Body of pancreas (tissue), 4 donors: ENCODE measurements at regions of chr22 and their contacts with region 1.

Region 1: DNA sequence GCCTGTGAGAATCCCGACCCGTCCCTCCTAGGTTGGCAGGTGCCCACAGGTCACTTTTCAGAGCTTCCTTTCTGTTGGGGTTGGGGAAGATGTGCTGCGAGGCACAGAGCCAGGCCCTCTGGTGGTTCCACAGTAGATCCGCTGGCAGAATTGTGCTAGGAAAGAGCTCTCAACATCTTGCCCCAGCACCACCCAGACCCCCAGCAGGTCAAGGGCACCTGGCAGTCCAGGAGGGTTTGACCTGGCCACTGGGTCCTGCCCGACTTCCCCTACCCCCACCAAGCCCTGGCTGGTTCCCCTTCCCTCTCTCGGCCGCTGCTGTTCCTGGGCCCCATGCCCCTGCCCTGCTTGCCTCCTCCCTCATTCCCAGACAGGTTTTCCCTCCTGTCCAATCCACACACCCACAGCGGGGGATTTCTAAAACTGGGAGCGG is 26.2 kb upstream of the GCAT start:
- DNase-seq: peak in 2 of 4 donors; percentile 39 to 43
- ATAC-seq: no peak
- H3K4me3 ChIP-seq: no peak overlapping the region
- H3K27ac ChIP-seq: no peak overlapping the region
- H3K4me1 ChIP-seq: peaks cover 20% of the 10 kb centered on the region
- H3K27me3 ChIP-seq: no peaks in the 10 kb centered on the region
- CTCF ChIP-seq: no peak
- POLR2A ChIP-seq: no peak

Region 2: GRCh38 chr22:37643225-37643847 is 138.2 kb before region 1 on chr22:
- intact Hi-C with region 1: loop called (anchors 10 kb)
- DNase-seq: peak; percentile 83 to 91 (median 88)
- ATAC-seq: peak; percentile 80
- H3K4me3 ChIP-seq: no peak overlapping the region
- H3K27ac ChIP-seq: no peak overlapping the region
- H3K4me1 ChIP-seq: peaks cover 38% of the 10 kb centered on the region
- H3K27me3 ChIP-seq: no peaks in the 10 kb centered on the region
- CTCF ChIP-seq: peak; percentile 84 to 90 (median 88)
- POLR2A ChIP-seq: no peak

Region 3: DNA sequence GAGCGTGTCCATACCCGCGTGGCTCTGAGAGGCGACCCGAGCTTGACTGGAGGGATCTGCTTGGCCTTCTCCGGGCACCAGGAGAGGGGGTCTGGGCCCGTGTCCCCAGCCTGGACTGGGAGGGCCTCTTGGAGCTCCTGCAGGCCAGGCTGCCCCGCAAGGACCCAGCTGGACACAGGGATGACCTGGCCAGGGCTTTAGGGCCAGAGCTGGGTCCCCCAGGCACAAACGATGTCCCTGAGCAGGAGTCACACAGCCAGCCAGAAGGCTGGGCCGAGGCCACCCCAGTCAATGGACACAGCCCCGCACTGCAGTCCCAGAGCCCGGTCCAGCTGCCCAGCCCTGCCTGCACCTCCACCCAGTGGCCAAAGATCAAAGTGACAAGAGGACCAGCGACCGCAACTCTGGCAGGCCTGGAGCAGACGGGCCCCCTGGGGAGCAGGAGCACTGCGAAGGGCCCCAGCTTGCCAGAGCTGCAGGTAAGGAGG is 46.5 kb before region 1 on chr22:
- intact Hi-C with region 1: loop called (anchors 5 kb)
- DNase-seq: peak in 3 of 4 donors; percentile 39 to 66 (median 61)
- ATAC-seq: peak; percentile 45
- H3K4me3 ChIP-seq: no peak overlapping the region
- H3K27ac ChIP-seq: no peak overlapping the region
- H3K4me1 ChIP-seq: peaks cover 15% of the 10 kb centered on the region
- H3K27me3 ChIP-seq: no peaks in the 10 kb centered on the region
- CTCF ChIP-seq: peak in 6 of 7 experiments; percentile 10 to 52 (median 46)
- POLR2A ChIP-seq: no peak